CD8-positive, alpha-beta T cell (primary cell): ENCODE measurements at regions of chrX and their contacts with region 1.

Region 1: DNA sequence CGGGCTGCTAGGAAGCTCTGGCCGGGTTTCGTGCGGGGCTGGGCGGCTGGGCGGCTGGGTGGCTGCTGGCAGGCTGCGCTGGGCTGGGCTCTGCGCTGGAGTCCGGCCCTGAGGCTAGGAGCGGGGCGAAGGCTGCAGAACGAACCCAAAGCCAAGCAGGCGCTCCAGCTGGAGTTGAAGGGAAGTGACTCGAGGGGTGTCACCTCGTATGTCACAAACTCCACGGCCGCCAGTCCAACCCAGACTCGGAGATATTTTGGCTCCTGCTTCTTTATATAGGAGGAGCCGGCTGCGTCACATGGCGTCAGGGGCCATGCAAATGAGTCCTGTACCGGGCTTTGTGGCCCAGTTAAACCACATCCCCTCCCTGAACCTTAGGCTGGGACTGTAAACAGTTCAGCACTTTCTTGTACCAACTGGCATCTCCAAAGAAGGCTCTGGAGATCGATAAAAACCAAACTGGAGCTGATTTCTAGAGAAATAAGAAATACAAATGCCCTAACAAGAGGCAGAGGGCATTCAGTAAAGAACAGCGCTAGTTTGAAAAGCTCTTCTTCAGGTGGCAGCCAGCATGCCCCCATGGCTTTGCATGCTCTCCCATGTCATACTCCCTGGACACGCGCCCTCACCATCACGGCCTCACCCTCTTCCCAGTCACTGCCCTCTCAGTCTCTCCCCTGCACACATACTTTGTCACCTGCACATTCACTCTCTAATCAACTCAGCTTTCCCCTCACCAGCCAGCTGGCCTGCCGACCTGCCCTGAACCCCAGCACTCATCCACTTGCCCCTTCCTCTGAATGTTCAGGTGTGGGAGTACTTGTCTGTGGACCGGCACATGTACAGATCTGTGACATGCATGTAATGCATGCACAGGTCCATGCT is 58.5 kb downstream of the TSC22D3 start:
- DNase-seq: peak; percentile 78 to 94 (median 90)
- ATAC-seq: peak; percentile 66
- H3K4me3 ChIP-seq: peak overlapping the region; percentile 78 to 91
- H3K4me3 Mint-ChIP-seq: peak overlapping the region; percentile 93
- H3K27ac ChIP-seq: peak overlapping the region; percentile 100
- H3K27ac Mint-ChIP-seq: peak overlapping the region; percentile 99
- H3K4me1 ChIP-seq: peaks cover 42% of the 10 kb centered on the region
- H3K4me1 Mint-ChIP-seq: peaks cover 48% of the 10 kb centered on the region
- H3K27me3 ChIP-seq: no peaks in the 10 kb centered on the region
- H3K27me3 Mint-ChIP-seq: no peaks in the 10 kb centered on the region
- CTCF ChIP-seq: no peak

Region 2: GRCh38 chrX:106780664-106781377 is 936.2 kb before region 1 on chrX:
- CTCF ChIA-PET with region 1: no interaction called
- POLR2A ChIA-PET with region 1: no interaction called
- intact Hi-C with region 1: no loop called
- DNase-seq: no peak
- ATAC-seq: no peak
- H3K4me3 ChIP-seq: no peak overlapping the region
- H3K4me3 Mint-ChIP-seq: no peak overlapping the region
- H3K27ac ChIP-seq: no peak overlapping the region
- H3K27ac Mint-ChIP-seq: no peak overlapping the region
- H3K4me1 ChIP-seq: no peaks in the 10 kb centered on the region
- H3K4me1 Mint-ChIP-seq: no peaks in the 10 kb centered on the region
- H3K27me3 ChIP-seq: no peaks in the 10 kb centered on the region
- H3K27me3 Mint-ChIP-seq: peaks cover 14% of the 10 kb centered on the region
- CTCF ChIP-seq: no peak

Region 3: DNA sequence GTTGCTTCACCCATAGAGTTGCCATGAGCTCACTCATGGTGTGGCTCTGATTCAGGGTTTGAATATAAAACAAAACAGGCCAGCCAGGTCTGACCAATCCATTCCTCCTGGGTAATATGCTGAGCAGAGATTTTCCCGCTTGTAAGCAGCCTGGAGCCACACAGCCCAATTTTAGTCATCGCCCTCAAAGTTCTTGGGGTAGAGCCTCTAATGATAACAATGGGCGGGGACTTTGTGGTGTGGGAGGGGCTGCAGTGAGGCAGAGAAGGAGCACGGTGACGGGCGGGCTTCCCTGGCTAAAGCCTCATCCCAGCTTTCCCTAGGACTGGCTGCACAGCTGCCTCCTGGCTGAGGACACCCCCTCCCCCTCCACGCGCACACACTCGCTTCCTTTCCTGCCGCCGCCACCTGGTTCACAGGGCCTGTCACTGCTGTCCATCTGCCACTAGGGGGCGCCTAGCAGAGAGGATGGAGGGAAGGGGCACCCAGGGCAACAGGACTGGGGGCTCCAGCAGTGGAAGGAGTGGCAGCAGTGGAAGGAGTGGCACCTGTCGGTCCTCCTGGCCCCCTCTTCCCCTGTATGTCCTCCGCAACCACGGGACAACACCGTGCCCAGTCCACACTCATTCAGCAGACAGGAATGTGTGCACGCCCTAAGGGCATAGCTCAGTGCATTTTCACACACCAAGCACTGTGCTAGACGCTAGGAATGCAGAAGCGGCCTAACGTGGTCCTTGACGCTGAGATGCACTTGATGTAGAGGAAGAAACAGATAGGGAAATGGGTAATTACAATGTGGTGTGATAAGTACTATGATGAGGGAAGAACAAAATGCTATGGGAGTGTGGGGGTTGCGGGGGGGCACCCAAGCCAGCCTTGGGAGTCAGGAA is 61.9 kb before region 1 on chrX:
- CTCF ChIA-PET with region 1: interaction called, 55 read pairs
- POLR2A ChIA-PET with region 1: interaction called, 4 read pairs
- intact Hi-C with region 1: loop called in 1 of 2 experiments (anchors 1 kb)
- DNase-seq: peak in 8 of 9 experiments; percentile 46 to 81 (median 69)
- ATAC-seq: peak; percentile 87
- H3K4me3 ChIP-seq: no peak overlapping the region
- H3K4me3 Mint-ChIP-seq: no peak overlapping the region
- H3K27ac ChIP-seq: no peak overlapping the region
- H3K27ac Mint-ChIP-seq: peak overlapping the region; percentile 57
- H3K4me1 ChIP-seq: peaks cover 11% of the 10 kb centered on the region
- H3K4me1 Mint-ChIP-seq: peaks cover 18% of the 10 kb centered on the region
- H3K27me3 ChIP-seq: peaks cover 0 to 2% of the 10 kb centered on the region in 2 experiments
- H3K27me3 Mint-ChIP-seq: no peaks in the 10 kb centered on the region
- CTCF ChIP-seq: peak; percentile 55

Region 4: DNA sequence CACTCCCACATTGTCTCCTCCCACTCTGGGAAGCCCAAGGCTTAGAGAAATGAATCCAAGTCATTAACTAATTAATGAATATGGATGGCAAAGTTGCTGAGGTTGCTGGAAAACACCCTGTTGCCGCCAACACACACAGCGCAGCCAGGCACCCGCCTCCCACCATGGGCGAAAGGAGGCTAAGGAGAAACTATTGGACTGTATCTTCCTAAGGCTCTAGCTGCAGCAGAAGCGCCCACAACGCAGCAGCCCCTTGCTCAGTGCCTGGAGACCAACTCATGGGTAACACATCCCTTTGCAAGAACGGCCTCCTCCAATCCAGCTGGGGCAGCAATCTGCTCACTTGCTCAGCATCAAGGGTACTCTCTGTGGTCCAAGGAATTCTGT is 24.3 kb after region 1 on chrX:
- CTCF ChIA-PET with region 1: interaction called, 23 read pairs
- POLR2A ChIA-PET with region 1: interaction called, 42 read pairs
- intact Hi-C with region 1: loop called (anchors 1 kb)
- DNase-seq: peak in 1 of 9 experiments; percentile 22
- ATAC-seq: peak; percentile 6
- H3K4me3 ChIP-seq: peak overlapping the region; percentile 29
- H3K4me3 Mint-ChIP-seq: peak overlapping the region; percentile 80
- H3K27ac ChIP-seq: peak overlapping the region; percentile 68 to 73
- H3K27ac Mint-ChIP-seq: peak overlapping the region; percentile 97
- H3K4me1 ChIP-seq: peaks cover 48% of the 10 kb centered on the region
- H3K4me1 Mint-ChIP-seq: peaks cover 44% of the 10 kb centered on the region
- H3K27me3 ChIP-seq: no peaks in the 10 kb centered on the region
- H3K27me3 Mint-ChIP-seq: no peaks in the 10 kb centered on the region
- CTCF ChIP-seq: no peak

Region 5: DNA sequence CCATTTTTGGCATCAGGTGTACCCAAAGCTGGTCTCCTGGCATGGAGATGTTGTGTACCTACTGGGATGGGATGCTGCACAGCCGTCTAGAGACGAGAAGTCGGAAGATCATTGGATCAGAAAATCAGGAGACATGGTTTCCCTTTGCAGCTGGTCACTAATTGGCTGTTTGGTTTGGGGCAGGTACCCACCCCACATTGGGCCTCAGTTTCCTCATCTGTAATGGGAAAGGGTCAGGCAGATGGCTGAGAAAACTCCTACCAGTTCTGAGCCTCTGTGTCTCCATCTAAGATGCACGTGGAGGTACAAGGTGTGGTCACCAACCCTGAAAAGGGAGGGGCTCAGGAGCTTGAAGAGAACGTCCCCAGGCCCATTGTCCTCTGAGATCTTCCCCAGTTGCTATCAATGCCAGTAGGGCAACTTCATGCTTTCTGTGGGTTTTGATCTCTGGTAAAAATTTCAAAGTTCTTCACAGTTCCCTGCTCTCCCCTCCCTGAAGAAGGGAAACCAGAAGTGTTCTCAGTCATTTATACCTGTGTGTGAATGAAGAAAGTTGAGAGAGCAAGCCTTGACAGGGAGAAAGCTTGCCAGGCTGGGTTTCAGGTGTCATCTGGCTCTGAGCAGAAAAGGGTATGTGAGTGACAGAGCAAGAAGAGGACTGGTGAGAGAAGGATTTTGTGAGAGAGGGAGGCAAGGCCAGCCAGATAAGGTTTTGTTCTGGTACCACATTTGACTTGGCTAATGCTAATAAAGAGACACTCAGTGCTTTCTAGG is 43.4 kb after region 1 on chrX:
- CTCF ChIA-PET with region 1: no interaction called
- POLR2A ChIA-PET with region 1: no interaction called
- intact Hi-C with region 1: loop called in 1 of 2 experiments (anchors 5 kb)
- DNase-seq: no peak
- ATAC-seq: no peak
- H3K4me3 ChIP-seq: no peak overlapping the region
- H3K4me3 Mint-ChIP-seq: no peak overlapping the region
- H3K27ac ChIP-seq: no peak overlapping the region
- H3K27ac Mint-ChIP-seq: no peak overlapping the region
- H3K4me1 ChIP-seq: no peaks in the 10 kb centered on the region
- H3K4me1 Mint-ChIP-seq: peaks cover 14% of the 10 kb centered on the region
- H3K27me3 ChIP-seq: no peaks in the 10 kb centered on the region
- H3K27me3 Mint-ChIP-seq: no peaks in the 10 kb centered on the region
- CTCF ChIP-seq: no peak

Region 6: DNA sequence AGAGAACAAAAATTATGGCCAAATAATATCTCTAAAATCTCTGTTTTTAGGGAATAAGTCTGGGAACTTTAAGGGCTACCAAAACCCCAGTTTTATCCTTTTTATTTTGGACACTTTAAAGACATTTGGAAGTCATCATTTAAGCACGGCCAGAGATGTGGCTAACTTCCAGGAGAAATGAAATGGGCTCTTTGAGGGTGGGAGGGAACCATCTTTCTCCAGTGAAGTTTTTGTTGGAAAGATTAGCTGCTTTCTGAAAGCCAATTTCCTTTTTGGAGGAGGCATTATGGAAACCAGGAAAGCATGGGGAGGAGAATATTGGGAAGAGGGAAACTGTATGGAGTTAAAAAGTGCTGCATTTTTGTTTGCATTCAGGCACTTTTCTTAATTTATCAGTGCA is 332.6 kb after region 1 on chrX:
- CTCF ChIA-PET with region 1: no interaction called
- POLR2A ChIA-PET with region 1: no interaction called
- intact Hi-C with region 1: no loop called
- DNase-seq: no peak
- ATAC-seq: no peak
- H3K4me3 ChIP-seq: no peak overlapping the region
- H3K4me3 Mint-ChIP-seq: no peak overlapping the region
- H3K27ac ChIP-seq: no peak overlapping the region
- H3K27ac Mint-ChIP-seq: no peak overlapping the region
- H3K4me1 ChIP-seq: no peaks in the 10 kb centered on the region
- H3K4me1 Mint-ChIP-seq: peaks cover 9% of the 10 kb centered on the region
- H3K27me3 ChIP-seq: no peaks in the 10 kb centered on the region
- H3K27me3 Mint-ChIP-seq: no peaks in the 10 kb centered on the region
- CTCF ChIP-seq: no peak